ENCODE measurements at regions of chr14 and their contacts with region 1.

Region 1: DNA sequence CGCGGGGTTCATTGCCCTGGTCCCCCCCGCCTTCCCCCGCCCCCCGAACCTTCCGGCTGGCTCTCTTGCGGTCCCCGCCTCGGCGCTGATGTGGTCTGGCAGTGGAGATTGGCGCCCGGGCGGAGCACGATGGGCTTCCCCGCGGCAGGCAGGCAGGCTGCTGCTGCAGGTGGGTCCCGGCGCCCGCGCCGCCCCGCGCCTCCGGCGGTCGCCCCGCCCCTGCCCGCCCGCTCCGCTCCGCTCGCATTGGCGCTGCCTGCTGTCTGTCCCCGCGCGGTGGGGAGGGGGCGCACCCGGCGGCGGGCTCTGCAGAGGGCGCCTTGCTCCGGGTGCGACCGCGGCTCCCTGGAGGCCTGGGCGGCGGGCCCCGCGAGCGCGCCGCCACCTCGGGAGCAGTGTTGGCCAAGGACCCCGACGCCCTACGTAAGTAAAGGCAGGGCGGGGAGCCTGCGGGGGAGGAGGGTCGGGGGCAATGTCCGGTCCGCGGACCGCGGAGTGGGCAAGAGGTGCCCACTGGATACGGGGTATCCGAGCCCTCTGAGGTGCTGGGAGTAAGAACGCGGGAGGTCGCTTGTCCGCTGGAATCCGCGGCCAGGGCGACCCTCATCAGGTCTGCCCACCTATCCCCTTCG is at the start of gene AKAP5:
- DNase-seq: peak; percentile 49 to 71 (median 60)
- ATAC-seq: peak; percentile 92
- H3K4me3 ChIP-seq: peak within 1 kb of the TSS; percentile 66
- H3K4me3 Mint-ChIP-seq: peak within 1 kb of the TSS; percentile 83 to 94 (median 90)
- H3K27ac ChIP-seq: peak within 1 kb of the TSS; percentile 55
- H3K27ac Mint-ChIP-seq: peak within 1 kb of the TSS; percentile 25 to 92 (median 70)
- H3K4me1 ChIP-seq: peaks cover 12 to 16% of the 10 kb centered on the region in 2 donors
- H3K4me1 Mint-ChIP-seq: peaks cover 23 to 50% (median 41%) of the 10 kb centered on the region in 7 donors
- H3K27me3 ChIP-seq: no peaks in the 10 kb centered on the region
- H3K27me3 Mint-ChIP-seq: peaks cover 0 to 3% (median 0%) of the 10 kb centered on the region in 5 donors
- total RNA-seq, gene AKAP5: 0.11 to 1.7 (median 0.13) TPM

Region 2: DNA sequence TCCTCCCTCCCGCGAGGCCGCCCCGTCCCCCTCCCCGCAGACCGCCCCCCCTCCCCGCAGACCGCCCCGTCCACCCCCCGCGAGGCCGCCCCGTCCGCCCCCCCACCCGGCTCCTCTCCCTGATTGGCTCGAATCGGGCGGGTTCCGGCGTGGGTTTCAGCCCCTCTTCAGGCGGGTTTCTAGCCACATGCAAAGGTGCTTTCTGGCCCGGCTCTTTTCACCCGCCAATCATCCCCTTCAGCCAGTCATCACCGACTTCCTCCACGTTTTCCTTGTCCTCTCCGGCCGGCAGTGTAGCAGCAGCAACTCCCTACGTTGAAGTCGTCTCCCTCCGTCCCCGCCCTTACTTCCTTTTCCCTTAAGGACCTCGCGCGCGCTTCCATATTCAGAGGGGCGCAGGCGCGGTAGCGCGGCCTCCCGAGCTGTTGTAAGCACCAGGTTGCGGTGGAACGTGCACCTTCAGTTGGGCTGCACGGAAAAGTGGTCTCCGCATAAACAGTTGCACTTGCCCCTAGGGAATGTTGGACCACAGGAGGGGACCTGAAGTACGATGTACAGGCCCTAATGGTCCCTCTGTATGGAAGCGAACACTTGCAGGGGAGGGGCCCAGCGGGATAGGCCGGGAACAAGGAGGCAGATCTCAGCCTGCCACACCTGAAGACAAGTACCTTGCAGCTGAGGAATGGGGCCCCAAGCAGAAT is 126.5 kb before region 1 on chr14:
- CTCF ChIA-PET with region 1: no interaction called
- POLR2A ChIA-PET with region 1: no interaction called
- intact Hi-C with region 1: loop called in 1 of 2 experiments (anchors 5 kb)
- DNase-seq: peak; percentile 50 to 84 (median 79)
- ATAC-seq: peak; percentile 87
- H3K4me3 ChIP-seq: peak overlapping the region; percentile 57
- H3K4me3 Mint-ChIP-seq: peak overlapping the region; percentile 87 to 99 (median 92)
- H3K27ac ChIP-seq: peak overlapping the region; percentile 72
- H3K27ac Mint-ChIP-seq: peak overlapping the region; percentile 81 to 91 (median 86)
- H3K4me1 ChIP-seq: peaks cover 5 to 10% of the 10 kb centered on the region in 2 donors
- H3K4me1 Mint-ChIP-seq: peaks cover 6 to 36% (median 19%) of the 10 kb centered on the region in 7 donors
- H3K27me3 ChIP-seq: no peaks in the 10 kb centered on the region
- H3K27me3 Mint-ChIP-seq: no peaks in the 10 kb centered on the region

Region 3: GRCh38 chr14:64387694-64388532 is 77.4 kb before region 1 on chr14 and contains the start of gene MTHFD1:
- CTCF ChIA-PET with region 1: no interaction called
- POLR2A ChIA-PET with region 1: no interaction called
- intact Hi-C with region 1: loop called in 1 of 2 experiments (anchors 5 kb)
- DNase-seq: peak; percentile 93 to 97 (median 96)
- ATAC-seq: peak; percentile 90
- H3K4me3 ChIP-seq: peak within 1 kb of the TSS; percentile 89
- H3K4me3 Mint-ChIP-seq: peak within 1 kb of the TSS; percentile 92 to 99 (median 96)
- H3K27ac ChIP-seq: peak within 1 kb of the TSS; percentile 79
- H3K27ac Mint-ChIP-seq: peak within 1 kb of the TSS; percentile 90 to 99 (median 95)
- H3K4me1 ChIP-seq: peaks cover 11 to 17% of the 10 kb centered on the region in 2 donors
- H3K4me1 Mint-ChIP-seq: peaks cover 18 to 49% (median 41%) of the 10 kb centered on the region in 7 donors
- H3K27me3 ChIP-seq: no peaks in the 10 kb centered on the region
- H3K27me3 Mint-ChIP-seq: peaks cover 0 to 4% (median 0%) of the 10 kb centered on the region in 5 donors
- total RNA-seq, gene MTHFD1: 28.0 to 189 (median 30.2) TPM

Region 4: DNA sequence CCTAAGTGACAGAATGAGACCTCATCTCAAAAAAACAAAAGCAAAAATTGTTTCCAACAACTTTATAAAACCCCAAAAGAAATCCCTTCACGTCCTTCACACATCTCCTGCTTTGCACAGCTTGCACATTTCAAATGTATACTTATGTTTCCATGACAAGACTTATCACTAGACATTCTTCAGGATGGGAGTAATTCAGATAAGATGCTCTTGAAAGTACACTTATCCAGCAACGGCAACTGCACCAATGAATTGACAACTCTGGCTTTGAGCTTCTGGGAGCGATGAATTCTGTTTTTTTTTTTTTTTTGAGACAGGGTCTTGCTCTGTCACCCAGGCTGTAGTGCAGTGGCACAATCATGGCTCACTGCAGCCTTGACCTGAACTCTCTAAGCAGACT is 30.8 kb before region 1 on chr14:
- CTCF ChIA-PET with region 1: interaction called, 5 read pairs
- POLR2A ChIA-PET with region 1: no interaction called
- intact Hi-C with region 1: loop called in 1 of 2 experiments (anchors 5 kb)
- DNase-seq: no peak
- ATAC-seq: no peak
- H3K4me3 ChIP-seq: no peak overlapping the region
- H3K4me3 Mint-ChIP-seq: no peak overlapping the region
- H3K27ac ChIP-seq: no peak overlapping the region
- H3K27ac Mint-ChIP-seq: no peak overlapping the region
- H3K4me1 ChIP-seq: no peaks in the 10 kb centered on the region
- H3K4me1 Mint-ChIP-seq: peaks cover 0 to 18% (median 0%) of the 10 kb centered on the region in 7 donors
- H3K27me3 ChIP-seq: no peaks in the 10 kb centered on the region
- H3K27me3 Mint-ChIP-seq: no peaks in the 10 kb centered on the region

Region 5: GRCh38 chr14:64444984-64445845 is 20.1 kb before region 1 on chr14:
- CTCF ChIA-PET with region 1: no interaction called
- POLR2A ChIA-PET with region 1: no interaction called
- intact Hi-C with region 1: loop called in 1 of 2 experiments (anchors 2 kb)
- DNase-seq: peak in 1 of 9 donors; percentile 45
- ATAC-seq: peak; percentile 86
- H3K4me3 ChIP-seq: no peak overlapping the region
- H3K4me3 Mint-ChIP-seq: peak overlapping the region in 1 of 10 donors; percentile 71
- H3K27ac ChIP-seq: no peak overlapping the region
- H3K27ac Mint-ChIP-seq: peak overlapping the region in 8 of 9 donors; percentile 32 to 88 (median 64)
- H3K4me1 ChIP-seq: peaks cover 0 to 16% of the 10 kb centered on the region in 2 donors
- H3K4me1 Mint-ChIP-seq: peaks cover 12 to 35% (median 16%) of the 10 kb centered on the region in 7 donors
- H3K27me3 ChIP-seq: no peaks in the 10 kb centered on the region
- H3K27me3 Mint-ChIP-seq: no peaks in the 10 kb centered on the region